ENCODE measurements at regions of chr11 and their contacts with region 1.

Region 1: DNA sequence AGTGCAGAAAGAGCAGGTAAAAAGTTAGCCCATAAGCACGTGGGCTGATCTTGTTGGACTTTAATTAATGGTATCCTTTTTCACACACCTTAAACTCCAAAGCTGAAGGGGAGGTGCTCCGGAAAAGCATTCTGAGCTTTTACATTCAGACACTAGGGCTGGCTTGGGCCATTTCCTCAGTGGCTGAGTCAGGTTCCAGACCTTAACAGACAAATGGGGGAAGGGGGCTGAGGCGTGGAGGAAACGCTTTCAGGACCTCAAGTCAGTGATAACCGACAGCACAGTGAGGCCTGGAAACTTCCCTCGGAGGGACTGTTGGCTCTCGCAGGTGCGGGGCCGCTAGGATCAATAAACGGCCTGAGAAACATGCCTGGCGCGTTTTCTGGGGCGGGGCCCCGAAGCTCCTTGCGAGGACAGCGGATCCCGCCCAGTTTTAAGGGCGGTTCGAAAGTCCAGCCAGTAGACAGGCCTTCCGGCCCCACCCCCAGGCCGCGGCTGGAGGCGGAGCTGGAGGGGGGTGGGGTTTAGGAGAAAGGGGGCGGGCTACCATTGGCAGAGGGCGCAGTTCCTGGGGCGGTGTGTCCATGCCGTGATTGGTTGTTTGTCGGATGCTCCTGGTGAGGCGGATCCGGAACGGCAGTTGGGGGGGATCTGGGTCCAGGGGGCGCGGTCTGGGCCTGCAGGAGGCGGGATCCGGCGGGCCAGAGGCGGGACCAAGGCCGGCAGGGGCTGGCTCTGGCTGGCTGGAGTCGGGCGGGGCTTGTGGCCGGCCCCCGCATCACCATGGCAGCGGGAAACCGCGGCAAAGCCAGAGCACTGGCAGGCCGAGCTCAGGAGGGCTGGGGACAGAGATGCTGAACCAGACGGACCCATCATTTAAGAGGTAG is 8.0 kb downstream of the C11orf52 start:
- DNase-seq: peak; percentile 96 to 97
- ATAC-seq: peak; percentile 88 to 96 (median 89)
- H3K4me3 ChIP-seq: peak overlapping the region; percentile 46
- H3K4me3 Mint-ChIP-seq: peak overlapping the region; percentile 88
- H3K27ac ChIP-seq: peak overlapping the region; percentile 82
- H3K27ac Mint-ChIP-seq: peak overlapping the region; percentile 79 to 94
- H3K4me1 ChIP-seq: peaks cover 15% of the 10 kb centered on the region
- H3K4me1 Mint-ChIP-seq: peaks cover 5 to 18% of the 10 kb centered on the region in 2 donors
- H3K27me3 ChIP-seq: no peaks in the 10 kb centered on the region
- H3K27me3 Mint-ChIP-seq: peaks cover 8 to 18% of the 10 kb centered on the region in 2 donors
- CTCF ChIP-seq: no peak

Region 2: DNA sequence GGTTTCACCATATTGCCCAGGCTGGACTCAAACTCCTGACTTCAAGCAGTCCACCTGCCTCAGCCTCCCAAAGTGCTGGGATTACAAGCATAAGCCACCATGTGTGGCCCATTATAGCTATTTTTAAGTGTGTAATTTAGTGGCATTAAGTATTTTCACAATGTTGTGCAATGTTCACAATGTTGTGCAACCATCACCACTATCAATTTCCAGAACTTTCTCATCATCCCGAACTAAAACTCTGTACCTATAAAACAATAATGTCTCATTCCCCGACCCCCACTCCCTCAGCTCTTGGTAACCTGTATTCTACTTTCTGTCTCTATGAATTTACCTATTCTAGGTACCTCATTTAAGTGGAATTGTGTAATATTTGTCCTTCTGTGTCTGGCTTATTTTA is 39.9 kb before region 1 on chr11:
- intact Hi-C with region 1: no loop called
- DNase-seq: no peak
- ATAC-seq: no peak
- H3K4me3 ChIP-seq: no peak overlapping the region
- H3K4me3 Mint-ChIP-seq: no peak overlapping the region
- H3K27ac ChIP-seq: no peak overlapping the region
- H3K27ac Mint-ChIP-seq: no peak overlapping the region
- H3K4me1 ChIP-seq: no peaks in the 10 kb centered on the region
- H3K4me1 Mint-ChIP-seq: no peaks in the 10 kb centered on the region
- H3K27me3 ChIP-seq: no peaks in the 10 kb centered on the region
- H3K27me3 Mint-ChIP-seq: peaks cover 0 to 9% of the 10 kb centered on the region in 2 donors
- CTCF ChIP-seq: no peak

Region 3: DNA sequence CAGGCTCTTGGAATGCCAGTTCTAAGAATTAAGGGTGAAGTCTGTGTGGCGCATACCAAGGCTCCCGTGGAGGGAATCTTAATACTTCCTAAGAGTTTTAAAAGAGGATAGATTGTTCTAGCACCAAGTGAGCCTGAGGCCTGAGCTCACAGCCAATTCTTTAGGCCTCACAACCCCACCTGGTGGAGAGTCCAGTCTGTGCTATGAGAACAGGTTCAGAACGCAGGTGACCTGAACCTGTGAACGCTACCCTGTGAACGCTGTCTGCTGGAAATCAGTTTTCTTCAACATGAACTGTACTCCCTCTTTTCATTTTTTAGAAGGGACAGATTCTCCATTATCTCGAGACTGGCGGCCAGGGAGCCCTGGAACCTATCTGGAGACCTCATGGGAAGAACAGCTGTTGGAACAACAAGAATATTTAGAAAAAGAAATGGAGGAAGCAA is 55.3 kb after region 1 on chr11:
- intact Hi-C with region 1: loop called (anchors 1 kb)
- DNase-seq: peak in 1 of 2 donors; percentile 69
- ATAC-seq: peak; percentile 50 to 81 (median 64)
- H3K4me3 ChIP-seq: no peak overlapping the region
- H3K4me3 Mint-ChIP-seq: no peak overlapping the region
- H3K27ac ChIP-seq: no peak overlapping the region
- H3K27ac Mint-ChIP-seq: no peak overlapping the region
- H3K4me1 ChIP-seq: peaks cover 6% of the 10 kb centered on the region
- H3K4me1 Mint-ChIP-seq: peaks cover 0 to 7% of the 10 kb centered on the region in 2 donors
- H3K27me3 ChIP-seq: peaks cover 12% of the 10 kb centered on the region
- H3K27me3 Mint-ChIP-seq: peaks cover 19 to 22% of the 10 kb centered on the region in 2 donors
- CTCF ChIP-seq: peak; percentile 42

Region 4: GRCh38 chr11:112024773-112025678 is 98.3 kb after region 1 on chr11 and contains the start of gene DLAT:
- intact Hi-C with region 1: loop called (anchors 2 kb)
- DNase-seq: peak; percentile 82 to 89
- ATAC-seq: peak; percentile 89 to 94 (median 93)
- H3K4me3 ChIP-seq: peak within 1 kb of the TSS; percentile 93
- H3K4me3 Mint-ChIP-seq: peak within 1 kb of the TSS; percentile 99
- H3K27ac ChIP-seq: peak within 1 kb of the TSS; percentile 75
- H3K27ac Mint-ChIP-seq: peak within 1 kb of the TSS; percentile 91 to 94
- H3K4me1 ChIP-seq: peaks cover 21% of the 10 kb centered on the region
- H3K4me1 Mint-ChIP-seq: peaks cover 21 to 25% of the 10 kb centered on the region in 2 donors
- H3K27me3 ChIP-seq: no peaks in the 10 kb centered on the region
- H3K27me3 Mint-ChIP-seq: no peaks in the 10 kb centered on the region
- CTCF ChIP-seq: no peak
- total RNA-seq, gene DLAT: 12.6 to 16.2 (median 15.5) TPM

Region 5: GRCh38 chr11:112057170-112057569 is 130.4 kb after region 1 on chr11:
- intact Hi-C with region 1: no loop called
- DNase-seq: no peak
- ATAC-seq: no peak
- H3K4me3 ChIP-seq: no peak overlapping the region
- H3K4me3 Mint-ChIP-seq: no peak overlapping the region
- H3K27ac ChIP-seq: no peak overlapping the region
- H3K27ac Mint-ChIP-seq: no peak overlapping the region
- H3K4me1 ChIP-seq: no peaks in the 10 kb centered on the region
- H3K4me1 Mint-ChIP-seq: no peaks in the 10 kb centered on the region
- H3K27me3 ChIP-seq: no peaks in the 10 kb centered on the region
- H3K27me3 Mint-ChIP-seq: no peaks in the 10 kb centered on the region
- CTCF ChIP-seq: no peak

Region 6: GRCh38 chr11:112086422-112087191 is 159.9 kb after region 1 on chr11 and contains the starts of genes SDHD and TIMM8B:
- intact Hi-C with region 1: loop called (anchors 2 kb)
- DNase-seq: peak; percentile 92 to 100
- ATAC-seq: peak; percentile 88 to 93 (median 90)
- H3K4me3 ChIP-seq: peak within 1 kb of the TSS; percentile 72
- H3K4me3 Mint-ChIP-seq: peak within 1 kb of the TSS; percentile 100
- H3K27ac ChIP-seq: peak within 1 kb of the TSS; percentile 69
- H3K27ac Mint-ChIP-seq: peak within 1 kb of the TSS; percentile 97 to 99
- H3K4me1 ChIP-seq: peaks cover 14% of the 10 kb centered on the region
- H3K4me1 Mint-ChIP-seq: peaks cover 46% of the 10 kb centered on the region in 2 donors
- H3K27me3 ChIP-seq: no peaks in the 10 kb centered on the region
- H3K27me3 Mint-ChIP-seq: no peaks in the 10 kb centered on the region
- CTCF ChIP-seq: peak; percentile 26
- total RNA-seq, gene SDHD: 46.8 to 55.0 (median 52.3) TPM
- total RNA-seq, gene TIMM8B: 14.6 to 17.8 (median 17.0) TPM